Activated CD8-positive, alpha-beta T cell treated with anti-CD3 and anti-CD28 coated beads for 36 hours (primary cell): ENCODE measurements at regions of chr4 and their contacts with region 1.

Region 1: DNA sequence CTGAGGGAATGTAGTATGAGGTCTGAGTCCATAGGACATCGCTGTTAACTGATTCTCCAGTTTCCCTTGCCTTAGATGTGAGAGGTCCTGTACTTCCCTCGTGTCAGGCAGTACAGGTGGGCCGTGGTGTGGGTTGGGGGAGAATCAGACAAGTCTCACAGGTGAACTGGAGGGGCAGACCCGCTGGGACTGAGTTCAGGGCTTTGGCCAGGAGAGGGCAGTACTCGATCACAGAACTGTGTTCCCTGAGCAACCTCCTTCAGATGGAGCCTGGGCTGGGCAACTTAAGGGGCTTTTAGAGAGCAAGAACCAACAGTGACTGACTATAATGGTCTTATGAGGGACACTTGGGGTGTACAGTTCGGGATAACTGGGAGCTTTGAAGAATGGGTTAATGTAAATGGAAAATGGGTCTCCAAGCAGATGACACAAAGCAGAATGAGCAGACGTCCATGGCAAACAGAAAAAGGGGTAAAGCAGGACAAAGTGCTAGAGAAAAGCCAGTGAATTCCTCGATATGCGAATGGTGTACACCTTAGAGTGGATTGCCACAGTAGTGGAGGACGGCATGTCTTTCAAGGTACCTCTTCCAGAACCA is 83.6 kb downstream of the CCNG2 start:
- DNase-seq: peak; percentile 77
- ATAC-seq: peak; percentile 79
- H3K4me3 Mint-ChIP-seq: no peak overlapping the region
- H3K27ac Mint-ChIP-seq: no peak overlapping the region
- H3K4me1 Mint-ChIP-seq: no peaks in the 10 kb centered on the region
- H3K27me3 Mint-ChIP-seq: peaks cover 8% of the 10 kb centered on the region
- CTCF ChIP-seq: peak; percentile 74

Region 2: DNA sequence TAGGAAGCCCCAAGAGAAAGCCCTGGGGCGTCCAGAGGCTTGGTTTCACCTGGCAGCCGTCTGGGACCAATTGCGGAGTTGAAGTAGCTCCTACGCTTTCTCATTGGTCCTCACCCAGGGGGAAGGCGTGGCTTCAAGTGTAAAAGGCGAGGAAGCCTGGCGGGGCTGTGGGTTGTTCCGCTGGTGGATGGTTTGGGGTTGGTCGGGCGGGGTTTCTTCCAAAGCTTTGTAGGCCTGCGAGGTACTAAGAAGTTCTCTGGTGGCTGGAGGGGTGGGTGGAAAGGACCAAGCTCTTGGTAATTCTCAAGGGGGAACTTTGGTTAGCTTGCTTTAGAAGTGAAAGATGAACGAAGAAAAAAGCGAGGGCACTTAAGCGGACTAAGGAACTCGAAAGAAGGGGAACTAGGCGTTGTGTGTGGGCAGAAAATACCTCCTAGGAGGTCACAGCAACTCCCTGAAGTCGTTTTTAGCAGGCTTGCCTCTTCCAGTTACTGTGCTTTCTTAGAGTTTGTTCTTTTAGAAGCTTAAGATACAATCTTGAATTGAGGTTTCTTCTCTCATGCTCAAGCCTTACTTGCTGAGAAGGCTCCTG is 47.0 kb before region 1 on chr4:
- CTCF ChIA-PET with region 1: no interaction called
- POLR2A ChIA-PET with region 1: no interaction called
- intact Hi-C with region 1: no loop called
- DNase-seq: peak; percentile 89
- ATAC-seq: peak; percentile 97
- H3K4me3 Mint-ChIP-seq: peak overlapping the region; percentile 72
- H3K27ac Mint-ChIP-seq: peak overlapping the region; percentile 82
- H3K4me1 Mint-ChIP-seq: peaks cover 20% of the 10 kb centered on the region
- H3K27me3 Mint-ChIP-seq: peaks cover 2% of the 10 kb centered on the region
- CTCF ChIP-seq: no peak

Region 3: GRCh38 chr4:77225022-77225421 is 15.5 kb before region 1 on chr4:
- CTCF ChIA-PET with region 1: interaction called, 17 read pairs
- POLR2A ChIA-PET with region 1: no interaction called
- intact Hi-C with region 1: no loop called
- DNase-seq: no peak
- ATAC-seq: no peak
- H3K4me3 Mint-ChIP-seq: no peak overlapping the region
- H3K27ac Mint-ChIP-seq: no peak overlapping the region
- H3K4me1 Mint-ChIP-seq: no peaks in the 10 kb centered on the region
- H3K27me3 Mint-ChIP-seq: peaks cover 8% of the 10 kb centered on the region
- CTCF ChIP-seq: no peak

Region 4: GRCh38 chr4:77308843-77309242 is 68.3 kb after region 1 on chr4:
- CTCF ChIA-PET with region 1: interaction called, 22 read pairs
- POLR2A ChIA-PET with region 1: no interaction called
- intact Hi-C with region 1: no loop called
- DNase-seq: no peak
- ATAC-seq: no peak
- H3K4me3 Mint-ChIP-seq: no peak overlapping the region
- H3K27ac Mint-ChIP-seq: no peak overlapping the region
- H3K4me1 Mint-ChIP-seq: no peaks in the 10 kb centered on the region
- H3K27me3 Mint-ChIP-seq: peaks cover 2% of the 10 kb centered on the region
- CTCF ChIP-seq: no peak

Region 5: GRCh38 chr4:77358315-77358928 is 117.9 kb after region 1 on chr4:
- CTCF ChIA-PET with region 1: interaction called, 46 read pairs
- POLR2A ChIA-PET with region 1: no interaction called
- intact Hi-C with region 1: loop called (anchors 2 kb)
- DNase-seq: peak; percentile 13
- ATAC-seq: peak; percentile 62
- H3K4me3 Mint-ChIP-seq: no peak overlapping the region
- H3K27ac Mint-ChIP-seq: no peak overlapping the region
- H3K4me1 Mint-ChIP-seq: no peaks in the 10 kb centered on the region
- H3K27me3 Mint-ChIP-seq: peaks cover 4% of the 10 kb centered on the region
- CTCF ChIP-seq: peak; percentile 72

Region 6: GRCh38 chr4:77493120-77493752 is 252.7 kb after region 1 on chr4:
- CTCF ChIA-PET with region 1: no interaction called
- POLR2A ChIA-PET with region 1: no interaction called
- intact Hi-C with region 1: no loop called
- DNase-seq: no peak
- ATAC-seq: no peak
- H3K4me3 Mint-ChIP-seq: no peak overlapping the region
- H3K27ac Mint-ChIP-seq: no peak overlapping the region
- H3K4me1 Mint-ChIP-seq: no peaks in the 10 kb centered on the region
- H3K27me3 Mint-ChIP-seq: peaks cover 20% of the 10 kb centered on the region
- CTCF ChIP-seq: no peak